Mammary epithelial cell (primary cell): ENCODE measurements at regions of chr9 and their contacts with region 1.

Region 1: GRCh38 chr9:76231001-76231400 is 163.2 kb downstream of the RFK start:
- DNase-seq: peak; percentile 5
- H3K4me3 ChIP-seq: no peak overlapping the region
- H3K27ac ChIP-seq: no peak overlapping the region
- H3K4me1 ChIP-seq: no peaks in the 10 kb centered on the region
- H3K27me3 ChIP-seq: no peaks in the 10 kb centered on the region
- CTCF ChIP-seq: no peak

Region 2: DNA sequence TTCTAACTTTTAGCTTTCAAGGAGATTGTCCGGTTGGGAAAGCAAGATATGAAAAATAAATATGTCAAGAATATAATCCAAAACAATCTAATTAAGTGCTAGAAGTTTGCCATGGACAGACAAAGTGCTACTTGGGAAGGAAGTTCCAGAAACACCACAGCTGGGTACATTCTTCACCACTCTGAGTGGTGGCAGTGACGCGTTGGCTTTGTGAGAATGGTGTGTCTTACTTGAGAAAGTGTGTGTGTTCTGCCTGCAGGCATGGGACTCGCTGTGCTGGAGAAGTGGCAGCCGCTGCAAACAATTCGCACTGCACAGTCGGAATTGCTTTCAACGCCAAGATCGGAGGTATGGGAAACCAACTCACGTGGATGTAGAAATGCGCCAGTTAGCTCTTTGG is 163.3 kb before region 1 on chr9:
- CTCF ChIA-PET with region 1: no interaction called
- dilution Hi-C with region 1: no loop called
- in situ Hi-C with region 1: no loop called
- intact Hi-C with region 1: no loop called
- DNase-seq: no peak
- H3K4me3 ChIP-seq: no peak overlapping the region
- H3K27ac ChIP-seq: no peak overlapping the region
- H3K4me1 ChIP-seq: no peaks in the 10 kb centered on the region
- H3K27me3 ChIP-seq: no peaks in the 10 kb centered on the region
- CTCF ChIP-seq: no peak

Region 3: DNA sequence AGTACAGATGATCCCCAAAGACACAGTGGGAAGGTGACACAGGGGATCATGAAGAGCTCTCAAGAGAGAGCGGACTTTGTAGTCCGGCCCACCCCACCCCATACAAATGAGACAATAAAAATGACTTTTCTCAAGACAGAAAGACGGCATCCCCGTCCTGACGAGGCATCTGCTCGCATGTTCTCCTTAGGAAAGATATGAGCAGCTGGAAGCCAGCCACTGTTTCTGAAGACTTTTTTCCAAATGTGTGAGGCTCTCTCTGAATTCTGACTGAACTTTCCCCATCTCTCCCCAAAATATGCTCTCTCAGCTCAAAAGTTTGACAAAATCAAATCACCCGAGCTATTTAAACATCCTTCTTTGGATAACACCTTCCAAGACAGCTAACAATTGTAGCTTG is 58.0 kb after region 1 on chr9:
- CTCF ChIA-PET with region 1: interaction called, 4 read pairs
- dilution Hi-C with region 1: loop called (anchors 5 kb)
- in situ Hi-C with region 1: no loop called
- intact Hi-C with region 1: no loop called
- DNase-seq: no peak
- H3K4me3 ChIP-seq: no peak overlapping the region
- H3K27ac ChIP-seq: no peak overlapping the region
- H3K4me1 ChIP-seq: no peaks in the 10 kb centered on the region
- H3K27me3 ChIP-seq: no peaks in the 10 kb centered on the region
- CTCF ChIP-seq: no peak